PC-9 (cell line): ENCODE measurements at regions of chr12 and their contacts with region 1.

Region 1: GRCh38 chr12:91778938-91779400 is 366.7 kb downstream of the BTG1 start:
- DNase-seq: peak; percentile 61 to 97
- H3K4me3 ChIP-seq: peak overlapping the region; percentile 22; the same call in 1 of the 2 replicates
- H3K27ac ChIP-seq: peak overlapping the region; percentile 98
- H3K4me1 ChIP-seq: peaks cover 30% of the 10 kb centered on the region
- H3K27me3 ChIP-seq: no peaks in the 10 kb centered on the region
- CTCF ChIP-seq: no peak

Region 2: GRCh38 chr12:91382081-91382543 is 396.9 kb before region 1 on chr12:
- CTCF ChIA-PET with region 1: no interaction called
- POLR2A ChIA-PET with region 1: no interaction called
- intact Hi-C with region 1: loop called (anchors 10 kb)
- DNase-seq: peak; percentile 51 to 67
- H3K4me3 ChIP-seq: no peak overlapping the region
- H3K27ac ChIP-seq: no peak overlapping the region
- H3K4me1 ChIP-seq: peaks cover 9% of the 10 kb centered on the region
- H3K27me3 ChIP-seq: no peaks in the 10 kb centered on the region
- CTCF ChIP-seq: peak; percentile 96

Region 3: DNA sequence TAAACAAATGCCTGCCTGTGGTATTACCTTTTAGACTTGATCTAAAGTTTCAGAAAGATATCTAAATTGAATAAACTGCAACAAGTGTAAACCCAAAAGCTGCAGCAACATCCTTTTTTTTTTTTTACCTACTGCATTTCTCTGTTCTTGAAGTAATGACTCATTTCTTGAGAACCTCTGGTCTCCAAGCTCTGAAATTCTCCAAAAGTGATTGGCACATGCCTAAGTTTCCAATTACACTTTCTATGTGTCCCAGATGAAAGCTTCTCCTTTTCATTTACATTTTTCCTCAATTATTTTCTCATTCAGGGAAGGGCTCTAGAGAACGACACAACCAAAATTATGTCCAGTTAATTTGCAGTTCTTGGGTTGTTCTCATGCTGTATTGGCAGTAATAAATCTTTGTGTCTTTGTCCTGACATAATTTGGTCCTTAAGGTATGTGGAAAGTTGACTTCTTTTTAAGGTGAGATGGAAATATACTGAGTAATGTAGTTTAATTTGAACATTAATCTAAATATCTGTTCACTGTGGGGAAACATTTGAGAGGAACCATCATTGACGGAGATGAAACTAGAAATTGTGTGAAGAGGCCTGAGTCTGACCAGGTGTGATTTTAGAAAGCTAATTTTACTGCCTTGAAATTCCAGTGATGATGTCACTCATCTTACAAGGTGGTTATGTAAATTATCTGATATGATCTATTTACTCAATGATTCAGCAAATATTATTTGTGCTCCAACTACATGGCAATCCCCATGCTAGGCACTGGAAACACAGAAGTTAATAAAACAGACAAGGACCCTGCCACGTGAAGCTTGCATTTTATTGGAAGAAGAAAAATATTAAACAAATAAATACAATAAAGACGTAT is 160.9 kb before region 1 on chr12:
- CTCF ChIA-PET with region 1: no interaction called
- POLR2A ChIA-PET with region 1: interaction called, 3 read pairs
- intact Hi-C with region 1: loop called (anchors 5 kb)
- DNase-seq: peak; percentile 5 to 74
- H3K4me3 ChIP-seq: peak overlapping the region; percentile 10; the same call in 1 of the 2 replicates
- H3K27ac ChIP-seq: peak overlapping the region; percentile 86
- H3K4me1 ChIP-seq: peaks cover 19% of the 10 kb centered on the region
- H3K27me3 ChIP-seq: no peaks in the 10 kb centered on the region
- CTCF ChIP-seq: no peak

Region 4: DNA sequence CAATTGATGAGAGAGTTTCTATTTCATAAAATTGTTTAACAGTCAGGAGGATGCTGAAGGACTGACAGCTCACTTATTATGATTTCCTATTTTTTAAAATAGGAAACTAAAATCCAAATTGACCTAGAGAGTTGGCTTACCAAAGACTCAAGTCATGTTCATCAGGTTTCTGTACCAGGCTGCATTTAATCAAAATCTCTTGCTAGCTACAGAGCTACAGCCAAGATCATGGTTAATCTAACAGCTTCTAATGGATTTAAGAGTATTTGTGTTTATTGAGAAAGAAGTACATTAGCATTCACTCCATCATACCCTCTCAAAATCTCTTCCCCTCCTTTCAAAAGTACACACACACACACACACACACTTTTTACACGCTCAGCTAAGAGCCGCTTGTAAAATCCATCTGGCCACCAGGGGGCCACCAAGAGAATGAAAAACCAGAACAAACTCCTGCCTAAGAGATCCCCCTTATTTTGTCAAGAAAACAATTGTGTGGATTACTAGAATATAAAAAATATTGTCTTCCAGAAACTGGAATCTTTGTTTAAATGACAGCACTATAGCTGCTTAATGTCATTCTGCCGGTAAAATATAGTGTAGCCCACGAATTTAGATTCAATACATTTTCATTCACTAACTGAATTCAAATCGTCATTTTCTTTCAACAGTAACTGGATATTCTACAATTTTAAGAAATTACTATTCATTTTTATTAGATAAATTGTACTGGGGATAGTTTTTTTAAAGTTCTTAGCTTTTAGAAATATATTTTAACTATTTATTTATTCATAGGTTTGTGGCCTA is 32.7 kb after region 1 on chr12:
- CTCF ChIA-PET with region 1: no interaction called
- POLR2A ChIA-PET with region 1: no interaction called
- intact Hi-C with region 1: no loop called
- DNase-seq: peak in 1 of 2 experiments; percentile 48
- H3K4me3 ChIP-seq: no peak overlapping the region
- H3K27ac ChIP-seq: no peak overlapping the region
- H3K4me1 ChIP-seq: no peaks in the 10 kb centered on the region
- H3K27me3 ChIP-seq: no peaks in the 10 kb centered on the region
- CTCF ChIP-seq: peak; percentile 83

Region 5: GRCh38 chr12:91890742-91891141 is 111.8 kb after region 1 on chr12:
- CTCF ChIA-PET with region 1: interaction called, 5 read pairs
- POLR2A ChIA-PET with region 1: no interaction called
- intact Hi-C with region 1: loop called (anchors 2 kb)
- DNase-seq: peak; percentile 16 to 65
- H3K4me3 ChIP-seq: no peak overlapping the region
- H3K27ac ChIP-seq: no peak overlapping the region
- H3K4me1 ChIP-seq: peaks cover 39% of the 10 kb centered on the region
- H3K27me3 ChIP-seq: no peaks in the 10 kb centered on the region
- CTCF ChIP-seq: no peak

Region 6: GRCh38 chr12:91985002-91985787 is 206.2 kb after region 1 on chr12:
- CTCF ChIA-PET with region 1: no interaction called
- POLR2A ChIA-PET with region 1: no interaction called
- intact Hi-C with region 1: loop called (anchors 5 kb)
- DNase-seq: no peak
- H3K4me3 ChIP-seq: no peak overlapping the region
- H3K27ac ChIP-seq: no peak overlapping the region
- H3K4me1 ChIP-seq: peaks cover 21% of the 10 kb centered on the region
- H3K27me3 ChIP-seq: no peaks in the 10 kb centered on the region
- CTCF ChIP-seq: no peak

Region 7: GRCh38 chr12:92078167-92079053 is 299.4 kb after region 1 on chr12:
- CTCF ChIA-PET with region 1: no interaction called
- POLR2A ChIA-PET with region 1: no interaction called
- intact Hi-C with region 1: loop called (anchors 1 kb)
- DNase-seq: peak; percentile 28 to 69
- H3K4me3 ChIP-seq: no peak overlapping the region
- H3K27ac ChIP-seq: peak overlapping the region; percentile 96
- H3K4me1 ChIP-seq: peaks cover 42% of the 10 kb centered on the region
- H3K27me3 ChIP-seq: no peaks in the 10 kb centered on the region
- CTCF ChIP-seq: no peak